ENCODE measurements at regions of chr4 and their contacts with region 1.

Region 1: GRCh38 chr4:39977489-39978377 is at the start of gene PDS5A:
- DNase-seq: peak; percentile 91
- ATAC-seq: peak; percentile 86
- H3K4me3 Mint-ChIP-seq: peak within 1 kb of the TSS; percentile 87
- H3K27ac Mint-ChIP-seq: peak within 1 kb of the TSS; percentile 92
- H3K4me1 Mint-ChIP-seq: peaks cover 32% of the 10 kb centered on the region
- H3K27me3 Mint-ChIP-seq: no peaks in the 10 kb centered on the region
- CTCF ChIP-seq: peak; percentile 27
- total RNA-seq, gene PDS5A: 91.9 and 103 TPM in 2 replicates

Region 2: GRCh38 chr4:39181905-39182638 is 795.7 kb before region 1 on chr4 and contains the start of gene WDR19:
- CTCF ChIA-PET with region 1: no interaction called
- POLR2A ChIA-PET with region 1: no interaction called
- intact Hi-C with region 1: loop called (anchors 2 kb)
- DNase-seq: peak; percentile 93
- ATAC-seq: peak; percentile 97
- H3K4me3 Mint-ChIP-seq: no peak within 1 kb of the TSS
- H3K27ac Mint-ChIP-seq: peak within 1 kb of the TSS; percentile 46
- H3K4me1 Mint-ChIP-seq: peaks cover 7% of the 10 kb centered on the region
- H3K27me3 Mint-ChIP-seq: no peaks in the 10 kb centered on the region
- CTCF ChIP-seq: no peak
- total RNA-seq, gene WDR19: 23.8 and 28.4 TPM in 2 replicates

Region 3: GRCh38 chr4:39469429-39470077 is 508.2 kb before region 1 on chr4:
- CTCF ChIA-PET with region 1: interaction called, 21 read pairs
- POLR2A ChIA-PET with region 1: interaction called, 5 read pairs
- intact Hi-C with region 1: loop called (anchors 1 kb)
- DNase-seq: no peak
- ATAC-seq: peak; percentile 99
- H3K4me3 Mint-ChIP-seq: peak overlapping the region; percentile 59
- H3K27ac Mint-ChIP-seq: peak overlapping the region; percentile 88
- H3K4me1 Mint-ChIP-seq: peaks cover 8% of the 10 kb centered on the region
- H3K27me3 Mint-ChIP-seq: no peaks in the 10 kb centered on the region
- CTCF ChIP-seq: peak; percentile 74

Region 4: GRCh38 chr4:39539089-39539700 is 438.5 kb before region 1 on chr4:
- CTCF ChIA-PET with region 1: no interaction called
- POLR2A ChIA-PET with region 1: no interaction called
- intact Hi-C with region 1: no loop called
- DNase-seq: no peak
- ATAC-seq: no peak
- H3K4me3 Mint-ChIP-seq: no peak overlapping the region
- H3K27ac Mint-ChIP-seq: no peak overlapping the region
- H3K4me1 Mint-ChIP-seq: no peaks in the 10 kb centered on the region
- H3K27me3 Mint-ChIP-seq: no peaks in the 10 kb centered on the region
- CTCF ChIP-seq: no peak

Region 5: GRCh38 chr4:39697740-39698423 is 279.9 kb before region 1 on chr4 and contains the start of gene UBE2K:
- CTCF ChIA-PET with region 1: interaction called, 4 read pairs
- POLR2A ChIA-PET with region 1: interaction called, 7 read pairs
- intact Hi-C with region 1: loop called (anchors 1 kb)
- DNase-seq: peak; percentile 93
- ATAC-seq: peak; percentile 89
- H3K4me3 Mint-ChIP-seq: peak within 1 kb of the TSS; percentile 99
- H3K27ac Mint-ChIP-seq: peak within 1 kb of the TSS; percentile 96
- H3K4me1 Mint-ChIP-seq: peaks cover 48% of the 10 kb centered on the region
- H3K27me3 Mint-ChIP-seq: no peaks in the 10 kb centered on the region
- CTCF ChIP-seq: no peak
- total RNA-seq, gene UBE2K: 54.4 and 64.0 TPM in 2 replicates

Region 6: GRCh38 chr4:39933671-39934590 is 43.8 kb before region 1 on chr4:
- CTCF ChIA-PET with region 1: interaction called, 3 read pairs
- POLR2A ChIA-PET with region 1: no interaction called
- intact Hi-C with region 1: loop called (anchors 5 kb)
- DNase-seq: no peak
- ATAC-seq: no peak
- H3K4me3 Mint-ChIP-seq: no peak overlapping the region
- H3K27ac Mint-ChIP-seq: peak overlapping the region; percentile 76
- H3K4me1 Mint-ChIP-seq: peaks cover 62% of the 10 kb centered on the region
- H3K27me3 Mint-ChIP-seq: no peaks in the 10 kb centered on the region
- CTCF ChIP-seq: no peak

Region 7: DNA sequence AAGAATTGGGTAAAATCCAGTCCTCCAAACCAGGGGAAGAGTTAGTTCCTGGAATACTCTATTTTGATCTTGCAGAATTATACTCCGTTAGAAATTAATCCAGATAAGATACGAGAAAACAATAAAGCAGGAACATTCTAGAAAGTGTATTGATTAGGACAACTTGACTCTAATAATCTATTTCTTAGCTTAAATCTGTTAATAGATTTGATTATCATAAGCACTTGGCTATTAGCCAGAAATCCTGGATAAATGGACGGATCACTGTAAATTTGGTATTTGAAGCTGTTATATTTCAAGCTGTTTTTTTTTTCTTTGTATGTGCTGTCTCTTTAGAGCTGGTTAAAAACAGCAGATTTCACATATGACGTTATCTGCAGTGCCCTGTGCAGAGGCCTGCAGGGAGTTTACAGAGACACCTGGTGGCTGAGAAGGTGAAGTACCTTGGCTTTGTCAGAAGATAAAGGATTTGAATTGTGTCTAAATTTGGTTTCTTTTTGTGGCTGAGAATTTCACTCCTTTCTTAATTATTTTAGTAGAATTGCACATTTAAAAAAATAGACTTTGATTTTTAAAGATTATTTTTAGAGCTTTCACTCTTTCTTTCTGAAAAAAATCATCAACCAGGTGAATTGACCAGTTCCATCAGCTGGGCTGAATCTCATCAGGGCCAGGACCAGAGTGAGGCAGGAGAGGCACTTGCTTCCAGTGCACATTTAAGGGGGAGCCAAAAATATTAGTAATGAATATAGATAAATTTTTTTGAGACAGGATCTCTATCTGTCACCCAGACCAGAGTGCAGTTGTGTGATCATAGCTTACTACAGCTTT is 347.7 kb after region 1 on chr4:
- CTCF ChIA-PET with region 1: interaction called, 6 read pairs
- POLR2A ChIA-PET with region 1: no interaction called
- intact Hi-C with region 1: loop called (anchors 1 kb)
- DNase-seq: no peak
- ATAC-seq: peak; percentile 100
- H3K4me3 Mint-ChIP-seq: no peak overlapping the region
- H3K27ac Mint-ChIP-seq: no peak overlapping the region
- H3K4me1 Mint-ChIP-seq: peaks cover 14% of the 10 kb centered on the region
- H3K27me3 Mint-ChIP-seq: peaks cover 5% of the 10 kb centered on the region
- CTCF ChIP-seq: no peak

Measured in activated B cell treated with CpG ODN at 0.5 μM for 24 hours (primary cell).